ENCODE measurements at regions of chr7 and their contacts with region 1.

Region 1: DNA sequence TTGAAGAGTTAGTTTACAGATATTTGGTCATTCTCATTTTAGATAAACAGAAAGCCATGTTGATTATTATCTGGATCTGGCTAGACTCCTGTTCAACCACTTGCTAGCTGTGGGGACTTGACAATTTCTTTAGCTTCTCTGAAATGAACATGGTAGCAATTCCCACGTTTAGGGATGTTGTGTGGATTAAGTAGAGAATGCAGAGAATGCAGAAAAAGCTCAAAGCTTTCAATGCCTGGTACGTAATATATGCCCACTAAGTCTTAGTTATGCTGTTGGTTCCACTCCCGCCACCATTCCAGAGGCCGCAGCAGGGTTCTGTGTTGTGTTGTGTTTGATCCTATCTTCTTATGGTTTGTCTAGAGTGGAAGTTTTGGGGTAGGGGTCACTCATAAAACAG is 39.2 kb upstream of the RPA3 start:
- DNase-seq: no peak
- H3K4me3 ChIP-seq: no peak overlapping the region
- H3K27ac ChIP-seq: no peak overlapping the region
- H3K4me1 ChIP-seq: peaks cover under 1 to 22% (median 14%) of the 10 kb centered on the region in 4 donors
- H3K27me3 ChIP-seq: no peaks in the 10 kb centered on the region
- CTCF ChIP-seq: no peak
- EP300 ChIP-seq: no peak
- POLR2A ChIP-seq: no peak

Region 2: DNA sequence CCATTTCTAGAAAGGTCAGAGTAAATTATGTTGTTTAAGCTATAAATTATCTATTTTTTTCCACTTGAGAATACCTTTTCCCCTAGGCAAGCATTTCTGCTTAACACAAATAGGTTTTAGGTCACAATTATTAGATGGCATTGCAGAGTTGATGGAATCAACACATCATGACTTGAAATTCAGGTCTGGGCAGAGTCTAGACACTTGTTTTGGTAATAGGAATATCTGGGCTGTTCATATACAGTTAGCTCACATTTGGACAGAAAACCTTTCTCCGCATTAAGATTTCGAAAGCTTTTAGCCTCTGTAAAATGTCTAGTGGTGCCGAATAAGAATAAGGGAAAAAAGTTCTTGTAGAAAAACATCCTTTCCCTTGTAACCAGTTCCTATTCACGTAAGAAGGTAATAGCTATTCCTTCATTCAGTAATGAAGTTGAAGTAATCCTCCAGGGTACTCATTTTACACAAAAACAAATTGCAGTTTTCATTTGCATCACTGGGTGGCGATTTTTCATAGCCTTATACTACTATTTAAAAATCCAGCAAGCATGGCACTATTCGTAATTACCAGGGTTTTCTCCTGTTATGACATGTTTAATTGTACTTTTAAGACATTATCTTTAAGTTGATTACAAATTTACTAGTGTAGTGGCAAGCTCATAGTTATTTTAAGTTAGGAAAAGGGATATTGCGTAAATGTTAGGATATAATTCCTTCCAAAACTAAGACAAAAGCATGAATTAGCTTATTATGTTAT is 76.2 kb before region 1 on chr7:
- intact Hi-C with region 1: loop called (anchors 5 kb)
- DNase-seq: no peak
- H3K4me3 ChIP-seq: no peak overlapping the region
- H3K27ac ChIP-seq: peak overlapping the region in 2 of 4 donors; percentile 8 to 50
- H3K4me1 ChIP-seq: peaks cover 8 to 22% (median 14%) of the 10 kb centered on the region in 4 donors
- H3K27me3 ChIP-seq: no peaks in the 10 kb centered on the region
- CTCF ChIP-seq: peak; percentile 60 to 63 (median 62)
- EP300 ChIP-seq: no peak
- POLR2A ChIP-seq: no peak

Region 3: DNA sequence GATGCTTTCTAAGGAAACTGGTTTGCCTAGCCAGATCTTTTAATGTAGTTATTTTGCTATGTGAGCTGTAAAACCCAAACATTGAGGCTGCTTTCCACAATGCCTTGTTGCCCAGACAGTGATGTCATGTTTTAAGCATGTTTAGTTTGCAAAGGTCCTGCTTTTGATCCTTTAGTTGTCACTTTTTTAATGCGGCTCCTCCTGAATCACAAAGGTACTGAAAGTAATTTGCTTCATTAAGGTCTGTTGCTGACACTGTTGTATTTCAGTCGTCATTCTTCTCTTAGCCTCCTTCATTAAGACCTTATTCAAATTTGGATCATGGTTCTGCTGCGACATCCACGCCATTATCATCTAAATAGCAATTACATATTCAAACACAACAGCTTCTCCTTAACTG is 49.8 kb before region 1 on chr7:
- intact Hi-C with region 1: no loop called
- DNase-seq: no peak
- H3K4me3 ChIP-seq: no peak overlapping the region
- H3K27ac ChIP-seq: no peak overlapping the region
- H3K4me1 ChIP-seq: peaks cover 12 to 29% (median 20%) of the 10 kb centered on the region in 4 donors
- H3K27me3 ChIP-seq: no peaks in the 10 kb centered on the region
- CTCF ChIP-seq: no peak
- EP300 ChIP-seq: no peak
- POLR2A ChIP-seq: no peak

Measured in esophagus muscularis mucosa (tissue), 4 donors.